Posterior vena cava (tissue), 2 donors: ENCODE measurements at regions of chr16 and their contacts with region 1.

Region 1: DNA sequence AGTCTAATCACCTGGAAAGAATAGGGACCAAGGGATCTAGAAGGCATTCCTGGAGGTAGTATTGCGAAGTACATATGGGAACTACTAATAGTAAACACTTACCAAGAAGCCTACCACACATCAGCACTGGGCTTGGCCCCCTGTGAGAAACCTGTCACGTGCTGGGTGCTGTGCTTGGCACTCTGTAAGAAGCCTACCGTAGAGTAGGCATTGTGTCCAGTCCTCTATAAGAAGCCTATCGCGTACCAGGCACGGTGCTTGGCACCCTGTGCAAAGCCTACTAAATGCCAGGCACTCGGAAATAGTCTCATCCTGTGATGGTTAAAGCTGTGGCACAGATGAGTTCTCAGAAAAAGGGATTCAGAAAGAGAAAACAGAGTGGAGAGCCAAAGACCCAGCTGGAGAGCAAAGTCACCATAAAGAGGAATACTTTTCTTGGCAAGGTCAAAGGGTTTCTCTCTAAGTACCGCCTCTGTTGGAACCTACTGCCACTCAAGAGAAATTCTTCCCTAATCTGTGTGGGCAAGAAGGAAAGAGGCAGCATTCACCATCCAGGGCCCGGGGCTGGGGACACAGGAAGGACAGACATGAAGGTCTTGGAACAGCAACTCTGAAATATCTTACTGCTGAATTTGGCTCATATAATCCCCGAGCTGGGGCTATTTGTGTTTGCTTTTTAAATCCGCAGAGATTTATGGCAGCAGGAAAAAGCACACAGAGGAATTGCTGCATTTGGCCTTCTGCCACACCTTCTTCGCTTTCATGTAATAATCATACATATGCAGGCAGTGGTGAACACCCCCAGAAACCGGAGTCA is 81.8 kb downstream of the VAT1L start:
- DNase-seq: no peak

Region 2: DNA sequence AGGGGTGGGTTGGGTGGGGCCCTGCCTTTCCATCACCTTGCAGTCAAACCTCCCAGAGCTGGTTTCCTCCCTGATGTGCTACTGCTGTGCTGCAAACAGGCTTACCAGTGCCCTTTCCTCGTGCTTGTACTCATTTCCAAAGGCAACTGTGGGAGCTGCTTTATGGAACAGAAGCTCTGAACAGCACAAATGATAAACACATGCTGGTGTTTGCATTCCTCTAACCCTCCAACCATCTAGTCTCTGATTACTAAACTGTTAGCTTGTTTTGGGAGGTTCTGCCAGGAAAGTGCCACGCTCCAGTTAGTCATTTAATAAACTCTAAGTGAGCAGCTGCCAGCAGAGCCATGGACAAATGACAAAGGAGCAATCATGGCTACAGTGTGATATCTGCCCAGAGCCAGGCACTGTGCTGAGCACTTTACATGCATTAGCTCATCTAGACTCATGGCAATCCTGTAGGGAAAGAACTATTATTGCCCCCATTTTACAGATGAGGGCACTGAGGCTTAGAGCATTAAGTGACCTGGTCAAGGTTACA is 28.5 kb after region 1 on chr16:
- intact Hi-C with region 1: no loop called
- DNase-seq: no peak

Region 3: DNA sequence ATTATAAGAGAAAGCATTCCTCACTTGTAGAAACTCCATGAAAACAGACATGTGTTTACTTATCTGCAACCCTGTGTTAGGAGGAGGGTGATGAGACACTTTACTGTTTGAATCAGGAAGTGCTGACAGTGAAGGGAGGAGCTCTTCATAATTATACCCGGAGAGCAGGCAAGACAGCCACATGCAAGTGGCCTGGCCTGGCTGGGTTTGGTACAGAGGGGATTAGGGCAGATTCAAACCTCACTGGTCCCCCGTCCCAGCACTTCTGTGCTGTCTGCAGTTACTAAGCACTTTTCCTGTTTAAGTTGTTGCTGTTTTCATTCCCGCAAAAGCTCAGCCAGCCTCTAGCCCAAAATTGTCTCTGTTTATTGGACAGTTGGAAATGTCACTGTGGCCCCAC is 307.8 kb after region 1 on chr16:
- intact Hi-C with region 1: loop called in 1 of 2 experiments (anchors 5 kb)
- DNase-seq: no peak